ENCODE measurements at regions of chr18 and their contacts with region 1.

Region 1: GRCh38 chr18:70044632-70045031 is 97.0 kb upstream of the CD226 start:
- DNase-seq: no peak
- H3K4me3 ChIP-seq: no peak overlapping the region
- H3K27ac ChIP-seq: no peak overlapping the region
- H3K4me1 ChIP-seq: peaks cover 32% of the 10 kb centered on the region
- H3K27me3 ChIP-seq: no peaks in the 10 kb centered on the region
- CTCF ChIP-seq: no peak

Region 2: DNA sequence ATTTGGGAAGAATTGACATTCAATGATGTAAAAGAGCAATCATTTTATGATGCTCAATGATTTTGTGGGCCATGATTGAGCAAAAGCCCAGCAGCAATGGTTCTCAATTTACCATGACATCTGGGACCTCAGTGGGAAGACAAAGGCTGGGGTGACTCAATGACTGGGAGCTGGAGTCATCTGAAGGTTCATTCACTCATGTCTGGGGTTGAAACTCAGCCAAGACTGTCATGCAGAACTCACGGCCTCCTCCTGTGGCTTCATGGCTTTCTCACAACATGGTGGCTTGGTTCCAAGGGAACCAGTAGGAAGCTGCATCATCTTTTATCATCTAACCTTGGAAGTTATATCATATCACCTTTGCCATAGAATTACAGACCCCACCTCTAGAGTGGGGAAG is 51.9 kb before region 1 on chr18:
- intact Hi-C with region 1: loop called (anchors 5 kb)
- DNase-seq: no peak
- H3K4me3 ChIP-seq: no peak overlapping the region
- H3K27ac ChIP-seq: no peak overlapping the region
- H3K4me1 ChIP-seq: peaks cover 9% of the 10 kb centered on the region
- H3K27me3 ChIP-seq: no peaks in the 10 kb centered on the region
- CTCF ChIP-seq: no peak

Region 3: GRCh38 chr18:70121842-70122241 is 77.2 kb after region 1 on chr18:
- intact Hi-C with region 1: no loop called
- DNase-seq: no peak
- H3K4me3 ChIP-seq: no peak overlapping the region
- H3K27ac ChIP-seq: no peak overlapping the region
- H3K4me1 ChIP-seq: no peaks in the 10 kb centered on the region
- H3K27me3 ChIP-seq: no peaks in the 10 kb centered on the region
- CTCF ChIP-seq: no peak

Region 4: GRCh38 chr18:70355620-70356385 is 311.2 kb after region 1 on chr18:
- intact Hi-C with region 1: no loop called
- DNase-seq: no peak
- H3K4me3 ChIP-seq: no peak overlapping the region
- H3K27ac ChIP-seq: no peak overlapping the region
- H3K4me1 ChIP-seq: no peaks in the 10 kb centered on the region
- H3K27me3 ChIP-seq: no peaks in the 10 kb centered on the region
- CTCF ChIP-seq: no peak

Region 5: DNA sequence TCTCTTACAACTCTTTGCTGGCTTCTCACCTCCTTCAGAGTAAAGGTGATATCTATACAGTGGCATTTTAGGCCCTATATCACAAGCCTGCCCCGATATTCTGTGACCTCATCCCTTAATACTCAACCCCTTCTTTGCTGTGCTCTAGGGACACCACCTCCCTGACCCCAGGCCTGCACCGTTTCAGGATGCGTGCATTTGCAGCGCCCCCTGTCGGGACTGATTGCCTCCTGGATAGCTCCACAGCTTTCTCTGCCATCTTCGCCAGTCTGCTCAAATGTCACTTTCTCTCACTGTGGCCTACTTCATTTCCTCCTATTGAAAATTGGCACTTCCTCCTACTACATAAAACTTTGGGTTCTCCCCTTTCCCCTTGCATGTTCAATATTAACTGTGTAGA is 533.8 kb after region 1 on chr18:
- intact Hi-C with region 1: no loop called
- DNase-seq: no peak
- H3K4me3 ChIP-seq: no peak overlapping the region
- H3K27ac ChIP-seq: no peak overlapping the region
- H3K4me1 ChIP-seq: no peaks in the 10 kb centered on the region
- H3K27me3 ChIP-seq: no peaks in the 10 kb centered on the region
- CTCF ChIP-seq: no peak

Measured in left ventricle myocardium inferior (tissue), 1 donor.